PC-9 (cell line): ENCODE measurements at regions of chr9 and their contacts with region 1.

Region 1: GRCh38 chr9:131317011-131317422 is 27.5 kb downstream of the PLPP7 start:
- DNase-seq: peak; percentile 83
- H3K4me3 ChIP-seq: no peak overlapping the region
- H3K27ac ChIP-seq: peak overlapping the region; percentile 44
- H3K4me1 ChIP-seq: peaks cover 37% of the 10 kb centered on the region
- H3K27me3 ChIP-seq: no peaks in the 10 kb centered on the region
- CTCF ChIP-seq: no peak

Region 2: DNA sequence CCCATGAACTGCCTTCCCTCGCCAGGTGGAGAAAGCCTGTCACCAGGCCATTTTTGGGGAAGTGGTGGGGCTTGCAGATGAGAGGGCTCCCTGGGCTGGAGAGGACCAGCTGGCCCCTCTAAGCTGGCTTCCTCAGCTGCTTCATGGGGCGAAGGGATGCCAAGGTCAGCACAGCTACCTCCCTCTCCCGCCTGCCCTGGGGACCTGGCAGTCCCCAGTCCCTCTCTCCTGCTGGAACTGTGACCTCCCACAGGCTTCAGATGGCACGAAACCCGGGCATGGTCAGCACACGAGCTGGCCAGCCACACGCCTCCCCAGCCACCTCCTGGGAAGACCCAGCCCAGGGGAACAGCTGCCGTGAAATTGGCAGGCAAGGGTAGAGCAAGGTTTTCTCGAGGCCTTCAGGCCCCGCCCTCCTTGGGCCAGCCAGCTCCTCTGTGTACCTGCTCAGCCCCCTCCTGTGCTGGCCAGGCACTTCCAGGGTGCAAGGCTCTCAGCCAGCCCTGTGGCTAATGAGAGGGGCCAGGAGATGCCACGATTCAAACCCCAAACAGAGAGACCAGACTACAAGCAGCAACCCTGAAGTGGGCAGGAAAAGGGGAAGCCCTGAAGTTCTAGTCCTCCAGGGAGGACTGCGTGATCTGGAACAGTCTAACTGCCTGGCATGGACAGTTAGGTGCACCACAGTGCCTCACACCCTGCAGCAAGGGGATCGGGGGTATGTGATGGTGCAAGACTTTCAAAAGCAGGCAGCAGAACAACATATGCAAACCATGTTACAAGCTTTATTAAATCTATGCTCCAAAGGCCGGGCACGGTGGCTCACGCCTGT is 14.6 kb before region 1 on chr9:
- CTCF ChIA-PET with region 1: no interaction called
- POLR2A ChIA-PET with region 1: interaction called, 21 read pairs
- intact Hi-C with region 1: no loop called
- DNase-seq: no peak
- H3K4me3 ChIP-seq: no peak overlapping the region
- H3K27ac ChIP-seq: no peak overlapping the region
- H3K4me1 ChIP-seq: peaks cover 15% of the 10 kb centered on the region
- H3K27me3 ChIP-seq: no peaks in the 10 kb centered on the region
- CTCF ChIP-seq: no peak

Region 3: GRCh38 chr9:131707733-131708157 is 390.7 kb after region 1 on chr9:
- CTCF ChIA-PET with region 1: interaction called, 10 read pairs
- POLR2A ChIA-PET with region 1: no interaction called
- intact Hi-C with region 1: no loop called
- DNase-seq: no peak
- H3K4me3 ChIP-seq: no peak overlapping the region
- H3K27ac ChIP-seq: 0 out of 2 replicates have a peak overlapping the region, but pooled peaks have one; percentile 11
- H3K4me1 ChIP-seq: peaks cover 13% of the 10 kb centered on the region
- H3K27me3 ChIP-seq: no peaks in the 10 kb centered on the region
- CTCF ChIP-seq: no peak